OCI-LY7 (cell line): ENCODE measurements at regions of chr2 and their contacts with region 1.

Region 1: DNA sequence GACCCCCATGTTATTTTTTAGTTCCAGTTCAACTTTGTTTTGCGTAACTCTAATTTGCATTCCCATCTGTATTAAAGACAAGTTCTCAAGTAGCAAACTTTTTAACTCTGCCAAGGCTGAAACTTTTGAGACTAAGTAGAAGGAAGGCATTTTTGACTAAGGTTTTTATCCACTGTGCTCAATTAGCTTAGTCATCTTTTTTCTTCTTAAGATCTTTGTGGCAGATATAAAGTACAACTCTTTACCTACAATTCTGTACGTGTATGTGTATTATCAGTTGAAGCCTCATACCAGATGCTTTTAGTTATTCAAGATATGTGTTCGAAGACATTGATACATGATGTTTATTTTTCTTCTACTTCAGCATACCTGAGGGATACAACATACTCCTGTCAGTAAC is 41.6 kb downstream of the CREB1 start:
- DNase-seq: no peak
- H3K4me3 ChIP-seq: no peak overlapping the region
- H3K27ac ChIP-seq: no peak overlapping the region
- H3K4me1 ChIP-seq: no peaks in the 10 kb centered on the region
- CTCF ChIP-seq: no peak

Region 2: DNA sequence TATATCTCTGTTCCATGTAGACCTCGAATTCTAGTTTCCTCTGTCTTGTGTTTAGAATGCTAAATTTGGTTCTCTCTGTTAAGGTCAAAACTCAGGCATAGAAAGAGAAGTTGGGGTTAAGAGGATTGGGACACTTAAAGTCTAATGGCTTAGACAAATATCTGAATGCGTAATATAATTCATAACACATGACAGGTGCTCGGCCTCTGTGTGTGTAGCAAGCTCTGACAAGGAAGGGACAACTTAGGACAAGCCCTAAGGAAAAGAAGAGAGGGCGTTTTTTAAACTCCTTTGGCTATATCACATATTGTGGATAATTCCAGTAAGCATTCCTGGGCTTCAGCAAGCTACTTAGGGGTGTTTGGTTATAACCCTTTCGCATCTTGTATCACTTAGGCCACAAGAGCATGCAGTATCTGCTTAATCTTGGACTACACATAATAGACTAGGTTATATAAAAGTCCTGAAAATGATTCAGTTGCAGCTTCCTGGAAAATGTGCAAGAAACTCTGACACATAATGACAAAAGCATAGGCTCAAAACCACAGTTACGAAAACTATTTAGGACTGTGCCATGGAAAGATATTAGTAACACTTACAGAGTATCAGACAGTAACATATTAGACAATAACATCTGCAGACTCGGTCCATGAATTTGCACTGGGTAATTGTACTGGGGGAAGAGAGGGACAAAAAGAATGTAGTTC is 57.7 kb before region 1 on chr2:
- CTCF ChIA-PET with region 1: no interaction called
- POLR2A ChIA-PET with region 1: interaction called, 11 read pairs
- intact Hi-C with region 1: no loop called
- DNase-seq: no peak
- H3K4me3 ChIP-seq: no peak overlapping the region
- H3K27ac ChIP-seq: no peak overlapping the region
- H3K4me1 ChIP-seq: no peaks in the 10 kb centered on the region
- CTCF ChIP-seq: no peak